Common myeloid progenitor, CD34-positive (primary cell): ENCODE measurements at regions of chr15 and their contacts with region 1.

Region 1: GRCh38 chr15:99090011-99090699 is 14.7 kb upstream of the SYNM start:
- DNase-seq: peak in 2 of 3 donors; percentile 35 to 37
- H3K4me3 ChIP-seq: no peak overlapping the region
- H3K27ac ChIP-seq: no peak overlapping the region
- H3K4me1 ChIP-seq: peaks cover 0 to 4% (median 0%) of the 10 kb centered on the region in 4 experiments
- H3K27me3 ChIP-seq: no peaks in the 10 kb centered on the region

Region 2: DNA sequence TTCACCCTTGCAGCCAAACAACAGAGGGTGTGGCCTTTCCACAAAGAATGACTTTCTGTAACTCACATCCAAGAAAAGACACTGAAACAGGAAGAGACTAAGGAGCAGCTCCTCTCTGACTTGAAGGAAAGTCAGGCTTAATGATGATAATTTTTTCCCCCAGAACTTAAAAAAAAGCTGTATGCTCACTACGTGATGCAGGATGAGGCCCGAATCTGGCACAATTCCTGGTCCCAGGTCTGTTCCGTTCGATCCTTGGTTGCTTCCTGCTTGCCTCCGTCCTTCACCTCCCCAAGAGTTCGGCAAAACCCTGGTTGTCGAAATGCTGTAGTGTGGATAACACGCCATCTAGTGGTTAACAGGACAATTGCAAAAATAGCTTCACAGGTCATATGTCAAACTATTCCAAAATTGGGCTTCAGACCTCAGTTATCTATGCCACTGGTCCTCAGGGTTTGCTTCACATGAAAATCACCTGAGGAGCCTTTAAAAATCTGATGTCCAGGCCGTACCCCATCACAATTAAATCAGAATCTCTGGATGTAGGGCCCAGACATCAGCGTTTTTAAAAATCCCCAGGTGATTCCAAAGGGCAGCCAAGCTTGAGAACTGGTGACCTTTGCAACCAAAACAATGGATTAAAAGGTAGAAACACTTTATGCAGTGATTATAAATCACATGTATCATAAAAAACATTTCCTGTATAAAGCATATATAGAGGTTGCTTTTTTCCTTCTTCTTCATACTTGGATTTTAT is 13.4 kb before region 1 on chr15:
- CTCF ChIA-PET with region 1: interaction called, 14 read pairs
- POLR2A ChIA-PET with region 1: no interaction called
- DNase-seq: peak; percentile 67 to 77 (median 76)
- H3K4me3 ChIP-seq: peak overlapping the region in 6 of 7 experiments; percentile 62 to 88 (median 69)
- H3K27ac ChIP-seq: no peak overlapping the region
- H3K4me1 ChIP-seq: peaks cover 0 to 5% (median 2%) of the 10 kb centered on the region in 4 experiments
- H3K27me3 ChIP-seq: no peaks in the 10 kb centered on the region

Region 3: DNA sequence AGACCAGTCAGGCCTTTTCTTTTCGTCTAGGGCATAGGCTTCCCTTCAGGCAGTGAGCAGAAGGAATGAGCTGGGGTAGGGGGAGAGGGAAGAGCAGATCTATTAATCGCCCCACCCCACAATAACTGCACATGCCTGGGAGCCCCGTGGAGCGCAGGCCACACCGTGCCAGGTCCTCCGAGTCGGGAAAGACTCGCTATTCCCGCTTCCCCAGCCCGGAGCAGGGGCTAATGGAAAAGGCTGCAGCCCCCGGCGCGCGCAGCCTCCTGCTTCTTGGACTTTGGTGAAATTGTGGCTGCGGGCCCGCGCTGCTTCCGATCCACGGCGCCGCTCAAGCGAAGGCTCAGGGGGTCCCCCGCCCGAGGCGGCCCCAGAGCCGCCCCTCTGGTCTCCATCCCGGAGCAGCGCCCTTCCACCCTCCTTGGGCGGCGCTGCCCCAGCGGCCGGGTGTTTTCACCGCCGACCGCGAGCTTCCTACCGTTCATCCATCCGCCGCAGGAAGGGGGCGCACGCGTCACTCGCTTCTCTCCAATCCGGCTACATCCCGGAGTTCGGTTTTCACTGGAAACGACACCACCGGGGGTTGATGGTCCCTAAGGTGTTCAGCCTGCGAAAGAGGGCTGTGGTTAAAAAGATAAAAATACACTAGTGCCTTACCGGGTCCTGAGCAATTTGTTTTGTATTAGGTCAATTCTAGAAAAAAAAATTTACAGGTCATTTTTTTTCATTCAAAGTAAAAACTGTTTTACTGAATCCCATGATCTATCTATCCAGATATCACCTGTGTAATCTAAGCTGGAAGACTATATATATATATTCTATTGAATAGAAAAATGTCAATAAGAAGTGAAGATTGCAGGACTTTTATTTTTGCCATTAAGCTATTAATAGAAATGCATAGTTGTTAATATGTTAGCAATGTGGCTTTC is 10.4 kb after region 1 on chr15:
- CTCF ChIA-PET with region 1: interaction called, 14 read pairs
- POLR2A ChIA-PET with region 1: interaction called, 3 read pairs
- DNase-seq: peak; percentile 53 to 72 (median 70)
- H3K4me3 ChIP-seq: peak overlapping the region in 5 of 7 experiments; percentile 36 to 57 (median 40)
- H3K27ac ChIP-seq: no peak overlapping the region
- H3K4me1 ChIP-seq: peaks cover 0 to 18% (median 16%) of the 10 kb centered on the region in 4 experiments
- H3K27me3 ChIP-seq: peaks cover 0 to 56% (median 14%) of the 10 kb centered on the region in 5 experiments